MCF 10A (cell line): ENCODE measurements at regions of chr10 and their contacts with region 1.

Region 1: GRCh38 chr10:6014241-6014761 is 37.0 kb upstream of the IL15RA start:
- DNase-seq: peak; percentile 64
- H3K4me3 Mint-ChIP-seq: no peak overlapping the region
- H3K27ac Mint-ChIP-seq: no peak overlapping the region
- H3K4me1 Mint-ChIP-seq: no peaks in the 10 kb centered on the region
- H3K27me3 Mint-ChIP-seq: peaks cover 11% of the 10 kb centered on the region
- CTCF ChIP-seq: peak; percentile 58

Region 2: GRCh38 chr10:5977471-5978229 is 36.7 kb before region 1 on chr10 and contains the start of gene IL15RA:
- CTCF ChIA-PET with region 1: interaction called, 3 read pairs
- POLR2A ChIA-PET with region 1: interaction called, 10 read pairs
- intact Hi-C with region 1: no loop called
- DNase-seq: peak; percentile 80
- H3K4me3 Mint-ChIP-seq: peak within 1 kb of the TSS; percentile 73
- H3K27ac Mint-ChIP-seq: peak within 1 kb of the TSS; percentile 70
- H3K4me1 Mint-ChIP-seq: no peaks in the 10 kb centered on the region
- H3K27me3 Mint-ChIP-seq: no peaks in the 10 kb centered on the region
- CTCF ChIP-seq: no peak
- total RNA-seq, gene IL15RA: 6.0 and 7.9 TPM in 2 replicates

Region 3: GRCh38 chr10:6025683-6026255 is 11.5 kb after region 1 on chr10:
- CTCF ChIA-PET with region 1: interaction called, 12 read pairs
- POLR2A ChIA-PET with region 1: no interaction called
- intact Hi-C with region 1: no loop called
- DNase-seq: no peak
- H3K4me3 Mint-ChIP-seq: no peak overlapping the region
- H3K27ac Mint-ChIP-seq: no peak overlapping the region
- H3K4me1 Mint-ChIP-seq: peaks cover 6% of the 10 kb centered on the region
- H3K27me3 Mint-ChIP-seq: peaks cover 15% of the 10 kb centered on the region
- CTCF ChIP-seq: no peak

Region 4: GRCh38 chr10:6033954-6034353 is 19.7 kb after region 1 on chr10:
- CTCF ChIA-PET with region 1: interaction called, 15 read pairs
- POLR2A ChIA-PET with region 1: interaction called, 4 read pairs
- intact Hi-C with region 1: no loop called
- DNase-seq: no peak
- H3K4me3 Mint-ChIP-seq: no peak overlapping the region
- H3K27ac Mint-ChIP-seq: no peak overlapping the region
- H3K4me1 Mint-ChIP-seq: no peaks in the 10 kb centered on the region
- H3K27me3 Mint-ChIP-seq: peaks cover 38% of the 10 kb centered on the region
- CTCF ChIP-seq: no peak

Region 5: DNA sequence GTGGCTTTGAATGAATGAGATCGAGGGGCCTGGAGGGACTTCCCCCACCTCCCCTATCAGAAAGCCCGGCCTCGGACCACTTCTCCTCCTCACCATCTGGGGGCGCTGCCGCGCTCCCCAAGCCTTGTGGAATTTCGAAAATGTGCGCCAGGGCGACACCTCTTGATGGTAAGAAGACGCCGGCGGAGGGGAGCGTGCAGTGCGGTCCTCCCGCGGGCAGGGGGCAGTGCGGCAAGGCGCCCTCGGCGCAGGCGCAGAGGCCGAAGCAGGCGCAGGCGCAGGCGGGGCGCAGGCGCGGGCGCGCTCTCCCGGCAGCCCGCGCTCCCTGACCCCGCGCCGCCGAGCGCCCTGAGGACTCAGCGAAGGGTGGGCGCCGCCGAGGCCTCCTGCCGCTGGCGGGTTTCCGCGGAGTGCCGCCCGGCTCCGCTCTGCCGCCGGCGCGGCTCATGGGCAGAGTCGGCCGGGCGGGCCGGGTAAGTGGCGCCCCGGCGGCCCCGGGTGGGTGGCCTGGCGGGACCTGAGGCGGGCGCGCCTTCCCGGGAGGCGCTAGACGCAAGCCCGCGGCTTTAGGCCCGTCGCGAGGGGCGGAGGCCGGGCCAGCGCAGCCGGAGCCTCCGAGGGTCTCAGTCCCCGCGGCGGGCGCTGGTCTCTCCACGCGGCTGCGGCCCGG is 74.6 kb after region 1 on chr10 and contains the start of gene RBM17:
- CTCF ChIA-PET with region 1: interaction called, 8 read pairs
- POLR2A ChIA-PET with region 1: interaction called, 3 read pairs
- intact Hi-C with region 1: loop called (anchors 5 kb)
- DNase-seq: peak; percentile 94
- H3K4me3 Mint-ChIP-seq: peak within 1 kb of the TSS; percentile 79
- H3K27ac Mint-ChIP-seq: peak within 1 kb of the TSS; percentile 52
- H3K4me1 Mint-ChIP-seq: peaks cover 32% of the 10 kb centered on the region
- H3K27me3 Mint-ChIP-seq: peaks cover 28% of the 10 kb centered on the region
- CTCF ChIP-seq: peak; percentile 100
- total RNA-seq, gene RBM17: 113 and 128 TPM in 2 replicates

Region 6: GRCh38 chr10:6108603-6109443 is 94.5 kb after region 1 on chr10:
- CTCF ChIA-PET with region 1: no interaction called
- POLR2A ChIA-PET with region 1: no interaction called
- intact Hi-C with region 1: no loop called
- DNase-seq: peak; percentile 51
- H3K4me3 Mint-ChIP-seq: no peak overlapping the region
- H3K27ac Mint-ChIP-seq: no peak overlapping the region
- H3K4me1 Mint-ChIP-seq: peaks cover 11% of the 10 kb centered on the region
- H3K27me3 Mint-ChIP-seq: no peaks in the 10 kb centered on the region
- CTCF ChIP-seq: peak; percentile 76